Panc1 (cell line): ENCODE measurements at regions of chr5 and their contacts with region 1.

Region 1: DNA sequence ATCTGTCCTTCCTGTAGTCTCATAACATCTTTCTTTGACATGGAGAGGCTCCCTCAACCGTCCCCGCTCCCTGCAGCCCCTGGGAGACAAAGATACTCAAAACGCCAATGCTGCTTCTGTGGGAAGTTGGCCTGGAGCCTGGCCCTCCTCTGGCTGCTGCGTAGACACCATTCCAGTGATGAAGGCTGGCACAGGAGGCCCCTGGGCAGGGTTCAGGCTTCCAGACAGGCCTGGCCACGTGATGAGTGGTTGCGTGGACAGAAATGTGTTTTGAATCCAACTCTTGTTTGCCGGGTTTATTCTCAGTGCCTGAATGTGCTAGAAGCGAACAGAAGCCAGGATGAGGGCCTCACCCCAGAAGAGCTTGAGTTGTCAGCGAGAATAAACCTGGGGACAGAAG is 43.2 kb upstream of the NKX2-5 start:
- DNase-seq: no peak
- ATAC-seq: no peak
- H3K4me3 ChIP-seq: no peak overlapping the region
- H3K27ac ChIP-seq: no peak overlapping the region
- H3K4me1 ChIP-seq: no peaks in the 10 kb centered on the region
- H3K27me3 ChIP-seq: no peaks in the 10 kb centered on the region
- CTCF ChIP-seq: no peak

Region 2: DNA sequence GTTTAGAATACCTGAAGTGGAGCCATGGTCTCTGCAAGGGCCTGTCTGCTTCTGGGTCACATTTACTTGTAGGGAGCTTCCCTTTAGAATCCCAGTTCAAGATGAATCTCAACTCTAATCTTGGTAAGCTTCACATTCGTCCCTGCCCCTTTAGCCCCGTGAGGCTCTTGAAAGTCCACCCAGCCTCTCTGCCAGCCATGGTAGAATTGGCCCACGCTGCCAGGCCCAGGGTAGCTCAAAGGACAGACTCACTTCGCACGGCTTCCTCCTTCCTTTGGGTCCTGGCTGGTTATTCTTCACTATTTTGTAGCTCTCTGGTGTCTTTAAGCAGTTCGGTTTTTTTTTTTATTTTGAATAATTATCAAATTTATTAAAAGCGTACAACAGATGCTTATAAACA is 14.6 kb before region 1 on chr5:
- CTCF ChIA-PET with region 1: interaction called, 9 read pairs
- POLR2A ChIA-PET with region 1: interaction called, 13 read pairs
- in situ Hi-C with region 1: no loop called
- intact Hi-C with region 1: no loop called
- DNase-seq: no peak
- ATAC-seq: no peak
- H3K4me3 ChIP-seq: no peak overlapping the region
- H3K27ac ChIP-seq: no peak overlapping the region
- H3K4me1 ChIP-seq: no peaks in the 10 kb centered on the region
- H3K27me3 ChIP-seq: peaks cover 10% of the 10 kb centered on the region; the same call in 1 of the 2 replicates
- CTCF ChIP-seq: no peak